Activated naive CD4-positive, alpha-beta T cell treated with anti-CD3 and anti-CD28 coated beads for 36 hours (primary cell): ENCODE measurements at regions of chr9 and their contacts with region 1.

Region 1: GRCh38 chr9:35696525-35697215 is 6.9 kb upstream of the TPM2 start:
- DNase-seq: peak; percentile 70
- H3K4me3 Mint-ChIP-seq: no peak overlapping the region
- H3K27ac Mint-ChIP-seq: peak overlapping the region; percentile 51
- H3K4me1 Mint-ChIP-seq: peaks cover 1% of the 10 kb centered on the region
- H3K27me3 Mint-ChIP-seq: no peaks in the 10 kb centered on the region

Region 2: DNA sequence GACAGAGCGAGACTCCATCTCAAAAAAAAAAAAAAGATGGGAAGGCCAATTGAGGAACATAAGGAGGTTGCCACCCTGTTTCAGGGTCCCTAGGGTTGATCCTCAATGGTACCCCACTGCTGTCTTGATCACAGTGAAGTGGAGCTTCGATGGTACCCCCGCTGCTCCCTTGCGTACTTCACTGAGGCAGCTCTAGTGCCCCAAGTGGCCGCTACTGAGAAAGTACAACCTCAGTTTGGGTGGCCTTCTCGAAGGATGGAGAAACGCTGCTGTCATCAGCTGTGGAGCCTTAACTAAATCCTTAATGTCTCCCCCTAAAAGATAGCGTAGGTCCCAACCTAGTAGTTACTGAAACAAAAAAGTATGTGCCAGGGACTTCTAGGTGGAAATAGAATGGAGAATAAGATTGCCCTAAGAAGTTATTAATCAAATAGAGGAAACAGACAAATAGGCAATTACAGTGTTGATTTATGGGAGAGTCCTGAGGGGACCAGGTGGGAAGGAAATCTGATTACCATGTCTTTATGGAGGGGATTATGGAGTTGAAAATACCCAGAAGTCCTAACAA is 85.4 kb before region 1 on chr9:
- CTCF ChIA-PET with region 1: interaction called, 18 read pairs
- intact Hi-C with region 1: no loop called
- DNase-seq: peak; percentile 67
- H3K4me3 Mint-ChIP-seq: no peak overlapping the region
- H3K27ac Mint-ChIP-seq: no peak overlapping the region
- H3K4me1 Mint-ChIP-seq: peaks cover 11% of the 10 kb centered on the region
- H3K27me3 Mint-ChIP-seq: no peaks in the 10 kb centered on the region

Region 3: GRCh38 chr9:35646533-35647265 is 50.0 kb before region 1 on chr9:
- CTCF ChIA-PET with region 1: interaction called, 25 read pairs
- intact Hi-C with region 1: loop called (anchors 1 kb)
- DNase-seq: peak; percentile 94
- H3K4me3 Mint-ChIP-seq: peak overlapping the region; percentile 90
- H3K27ac Mint-ChIP-seq: peak overlapping the region; percentile 83
- H3K4me1 Mint-ChIP-seq: peaks cover 43% of the 10 kb centered on the region
- H3K27me3 Mint-ChIP-seq: no peaks in the 10 kb centered on the region

Region 4: DNA sequence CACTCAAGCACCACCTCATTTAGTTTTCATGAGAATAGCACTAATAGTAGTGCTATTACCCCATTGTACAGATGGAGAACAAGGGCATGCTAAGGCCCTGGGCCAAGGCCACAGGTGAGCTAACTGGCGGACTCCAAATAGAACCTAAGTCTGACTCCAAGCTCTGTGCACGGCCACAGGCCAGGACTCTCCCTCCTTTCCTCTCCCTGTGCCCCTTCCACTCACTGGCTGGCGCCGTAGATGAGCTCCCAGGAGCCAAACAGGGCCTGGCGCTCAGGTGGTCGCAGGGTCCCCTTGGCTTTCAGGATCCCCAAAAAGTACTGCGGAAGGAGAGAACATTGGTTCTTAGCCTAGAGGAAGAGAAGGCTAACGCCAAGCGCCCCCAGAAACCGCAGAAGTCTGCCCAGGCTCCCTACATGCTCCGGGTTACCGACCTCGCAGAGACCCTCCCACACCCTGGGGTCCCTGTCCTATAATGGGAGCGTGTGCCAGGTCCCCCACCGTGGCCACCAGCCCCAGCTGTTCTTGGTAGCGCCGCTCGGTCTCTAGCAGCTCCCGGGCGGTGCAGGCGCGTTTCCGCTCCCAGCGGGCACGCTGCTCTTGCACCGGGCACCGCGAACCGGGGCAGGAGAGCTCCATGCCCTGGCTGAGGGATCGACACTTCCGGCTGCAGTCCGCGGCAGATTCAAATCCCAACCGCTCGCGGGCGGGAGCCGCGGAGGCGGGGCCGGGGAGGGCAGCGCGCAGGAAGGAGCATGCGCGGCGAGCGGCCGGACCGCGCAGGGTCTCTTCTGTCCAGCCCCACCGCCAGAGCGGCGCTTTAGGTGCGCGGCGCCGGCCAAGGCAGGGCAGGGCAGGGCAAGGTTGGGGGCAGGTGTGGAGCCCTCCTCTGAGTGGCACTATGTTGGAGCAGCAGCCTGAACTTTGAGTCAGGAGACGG is 31.9 kb before region 1 on chr9 and contains the start of gene ARHGEF39:
- CTCF ChIA-PET with region 1: interaction called, 86 read pairs
- intact Hi-C with region 1: loop called (anchors 2 kb)
- DNase-seq: peak; percentile 87
- H3K4me3 Mint-ChIP-seq: peak within 1 kb of the TSS; percentile 82
- H3K27ac Mint-ChIP-seq: peak within 1 kb of the TSS; percentile 67
- H3K4me1 Mint-ChIP-seq: peaks cover 49% of the 10 kb centered on the region
- H3K27me3 Mint-ChIP-seq: no peaks in the 10 kb centered on the region
- total RNA-seq, gene ARHGEF39: 28.9 to 30.4 TPM

Region 5: GRCh38 chr9:35716230-35716629 is 19.6 kb after region 1 on chr9:
- CTCF ChIA-PET with region 1: interaction called, 53 read pairs
- intact Hi-C with region 1: no loop called
- DNase-seq: no peak
- H3K4me3 Mint-ChIP-seq: no peak overlapping the region
- H3K27ac Mint-ChIP-seq: no peak overlapping the region
- H3K4me1 Mint-ChIP-seq: peaks cover 2% of the 10 kb centered on the region
- H3K27me3 Mint-ChIP-seq: no peaks in the 10 kb centered on the region